PC-3 (cell line): ENCODE measurements at regions of chr13 and their contacts with region 1.

Region 1: DNA sequence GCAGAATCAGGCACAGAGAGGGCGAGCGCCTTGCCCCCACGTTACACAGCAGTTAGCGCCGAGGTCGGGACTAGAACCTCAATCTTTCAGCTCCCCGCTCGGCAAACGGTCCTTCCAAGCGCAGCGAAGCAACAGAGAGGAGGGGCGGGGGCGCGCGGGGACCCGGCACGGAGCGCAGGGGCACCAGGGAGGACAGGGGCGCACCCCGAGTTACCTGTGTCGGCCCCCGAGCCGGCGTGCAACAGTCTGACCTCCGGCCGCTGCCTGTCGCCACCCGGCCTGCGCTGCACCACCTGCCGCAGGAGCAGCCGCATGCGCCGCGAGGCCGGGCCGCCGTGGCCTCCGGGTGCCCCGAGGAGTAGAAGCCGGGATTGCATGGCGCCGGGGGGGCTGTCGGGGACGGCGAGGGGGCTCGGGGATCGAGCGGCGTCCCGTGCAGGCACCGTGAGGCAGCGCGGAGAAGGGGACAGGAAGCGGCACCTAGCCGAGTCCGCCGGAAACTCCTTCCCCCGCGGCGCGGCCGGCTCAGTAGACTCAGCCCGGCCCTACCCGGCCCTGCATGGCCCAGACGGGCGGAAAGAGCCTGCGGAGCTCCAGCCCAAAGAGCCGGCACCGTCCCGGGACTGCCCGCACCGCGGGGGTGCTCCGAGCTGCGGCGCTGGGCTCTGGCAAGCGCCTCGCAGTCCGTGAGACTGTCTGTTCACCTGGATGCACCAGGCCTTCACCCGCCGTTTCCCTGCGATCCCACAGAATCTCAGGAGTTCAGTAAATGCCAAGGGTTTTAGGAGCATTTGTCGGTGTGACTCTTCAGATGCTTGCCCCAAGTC is at the start of gene VWA8:
- DNase-seq: peak; percentile 77
- ATAC-seq: peak; percentile 95
- H3K4me3 ChIP-seq: peak within 1 kb of the TSS; percentile 79
- H3K27ac ChIP-seq: peak within 1 kb of the TSS; percentile 58
- H3K4me1 ChIP-seq: peaks cover 19% of the 10 kb centered on the region
- H3K27me3 ChIP-seq: no peaks in the 10 kb centered on the region
- CTCF ChIP-seq: no peak
- total RNA-seq, gene VWA8: 10.0 and 12.2 TPM in 2 replicates

Region 2: DNA sequence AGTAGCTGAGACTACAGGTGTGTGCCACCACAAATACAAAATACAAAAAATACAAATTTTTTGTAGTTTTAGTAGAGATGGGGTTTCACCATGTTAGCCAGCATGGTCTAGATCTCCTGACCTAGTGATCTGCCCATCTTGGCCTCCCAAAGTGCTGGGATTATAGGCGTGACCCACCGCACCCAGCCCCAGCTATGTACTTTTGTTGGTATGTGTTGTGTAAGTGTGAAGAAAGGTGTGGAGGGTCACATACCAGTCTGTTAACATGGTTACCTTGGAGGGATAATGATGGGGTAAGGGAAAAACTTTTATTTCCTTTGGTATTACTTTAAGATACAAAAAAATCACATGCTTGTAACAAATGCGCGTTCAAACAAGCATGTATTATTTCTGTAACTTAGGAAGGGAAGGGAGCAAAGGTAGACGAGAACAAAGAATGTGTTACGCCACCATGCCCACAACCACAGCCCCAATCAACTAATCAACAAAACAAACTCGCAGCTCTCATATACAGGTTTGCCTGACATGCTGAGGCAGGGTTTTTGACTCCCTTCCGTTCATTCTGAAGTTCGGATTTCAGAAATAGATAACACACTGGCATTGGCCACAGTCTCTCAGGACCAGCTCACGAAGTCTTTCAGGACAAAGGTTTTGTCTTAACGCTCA is 13.5 kb after region 1 on chr13:
- CTCF ChIA-PET with region 1: no interaction called
- POLR2A ChIA-PET with region 1: interaction called, 10 read pairs
- intact Hi-C with region 1: no loop called
- DNase-seq: no peak
- ATAC-seq: no peak
- H3K4me3 ChIP-seq: no peak overlapping the region
- H3K27ac ChIP-seq: no peak overlapping the region
- H3K4me1 ChIP-seq: no peaks in the 10 kb centered on the region
- H3K27me3 ChIP-seq: no peaks in the 10 kb centered on the region
- CTCF ChIP-seq: no peak